Stomach (tissue), 19 donors: ENCODE measurements at regions of chr15 and their contacts with region 1.

Region 1: DNA sequence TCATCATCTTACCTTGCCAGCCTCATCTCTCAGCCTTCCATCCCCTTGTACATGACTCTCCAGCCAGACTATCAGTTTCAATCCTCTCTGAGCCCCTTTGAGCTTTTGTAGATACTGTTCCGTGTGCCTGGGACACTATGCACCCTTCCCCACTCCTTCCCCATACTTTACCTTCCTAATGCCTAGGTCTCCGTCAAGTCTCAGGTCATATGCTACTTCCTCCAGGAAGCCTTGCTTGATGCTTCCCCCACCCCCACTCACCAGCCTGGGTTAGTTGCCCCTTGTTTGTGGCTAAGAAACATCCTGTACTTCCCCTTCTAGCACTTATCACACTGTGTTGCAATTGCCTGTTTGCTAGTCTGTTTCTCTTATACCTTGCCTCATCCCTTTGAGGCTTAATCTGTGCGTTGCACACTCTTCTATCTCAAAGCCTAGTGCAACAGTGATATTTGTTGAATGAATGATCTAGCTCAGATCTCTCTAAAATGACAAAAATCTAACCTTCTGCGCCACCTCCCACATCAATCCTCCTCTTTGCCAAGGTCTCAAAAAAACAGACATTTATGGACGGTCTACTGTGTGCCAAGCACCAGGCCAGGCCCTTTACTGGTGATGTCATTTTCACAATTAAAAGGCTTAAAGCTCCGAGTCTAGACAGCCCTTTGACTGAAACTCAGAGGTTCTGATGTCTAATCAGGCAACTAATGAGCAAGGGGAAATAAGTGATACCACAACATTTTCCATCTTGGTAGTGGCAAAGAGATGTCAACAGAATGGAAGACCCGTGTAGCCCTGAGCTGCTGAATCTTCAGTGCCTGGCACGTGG is 6.5 kb upstream of the USP3 start:
- DNase-seq: peak; percentile 56 to 71
- H3K4me3 ChIP-seq: peak overlapping the region in 1 of 4 donors; percentile 23
- H3K27ac ChIP-seq: peak overlapping the region; percentile 41 to 100 (median 66)
- H3K4me1 ChIP-seq: peaks cover 37 to 90% (median 61%) of the 10 kb centered on the region in 4 donors
- H3K27me3 ChIP-seq: no peaks in the 10 kb centered on the region
- CTCF ChIP-seq: no peak
- EP300 ChIP-seq: no peak
- POLR2A ChIP-seq: no peak

Region 2: DNA sequence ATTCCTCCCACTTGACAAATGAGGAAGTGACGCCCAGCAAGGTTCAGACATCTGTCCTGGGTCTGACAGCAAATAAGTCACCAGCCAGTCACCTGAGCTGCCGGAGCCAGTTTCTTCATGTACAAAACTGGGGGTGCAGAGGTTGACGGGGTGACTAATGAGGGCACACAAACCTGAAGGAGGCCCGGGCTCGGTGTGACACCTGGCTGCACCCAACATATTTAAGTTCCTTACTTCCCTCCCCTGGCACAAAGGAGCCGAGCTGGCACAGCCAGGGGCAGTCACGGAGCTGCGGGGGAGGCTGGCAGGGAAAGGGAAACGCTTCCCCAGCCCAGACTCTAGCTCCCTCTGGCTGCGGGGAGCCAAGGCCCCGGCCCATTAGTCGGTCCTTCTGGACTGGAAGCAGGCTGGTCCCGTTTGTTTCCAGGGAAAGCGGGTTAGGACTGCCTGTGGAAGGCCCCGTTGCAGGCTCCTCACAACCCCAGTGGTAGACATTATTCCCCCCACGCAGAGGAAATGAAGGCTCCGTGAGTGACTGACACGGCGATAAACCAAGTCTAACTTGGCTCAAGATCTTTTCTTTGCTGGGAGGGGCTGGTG is 101.6 kb after region 1 on chr15:
- intact Hi-C with region 1: loop called (anchors 10 kb)
- DNase-seq: peak; percentile 84 to 88
- H3K4me3 ChIP-seq: peak overlapping the region; percentile 68 to 83 (median 76)
- H3K27ac ChIP-seq: peak overlapping the region; percentile 87 to 95 (median 94)
- H3K4me1 ChIP-seq: peaks cover 32 to 89% (median 62%) of the 10 kb centered on the region in 4 donors
- H3K27me3 ChIP-seq: no peaks in the 10 kb centered on the region
- CTCF ChIP-seq: peak in 5 of 7 experiments; percentile 61 to 92 (median 71)
- EP300 ChIP-seq: no peak
- POLR2A ChIP-seq: no peak